KBM-7 (cell line): ENCODE measurements at regions of chr6 and their contacts with region 1.

Region 1: DNA sequence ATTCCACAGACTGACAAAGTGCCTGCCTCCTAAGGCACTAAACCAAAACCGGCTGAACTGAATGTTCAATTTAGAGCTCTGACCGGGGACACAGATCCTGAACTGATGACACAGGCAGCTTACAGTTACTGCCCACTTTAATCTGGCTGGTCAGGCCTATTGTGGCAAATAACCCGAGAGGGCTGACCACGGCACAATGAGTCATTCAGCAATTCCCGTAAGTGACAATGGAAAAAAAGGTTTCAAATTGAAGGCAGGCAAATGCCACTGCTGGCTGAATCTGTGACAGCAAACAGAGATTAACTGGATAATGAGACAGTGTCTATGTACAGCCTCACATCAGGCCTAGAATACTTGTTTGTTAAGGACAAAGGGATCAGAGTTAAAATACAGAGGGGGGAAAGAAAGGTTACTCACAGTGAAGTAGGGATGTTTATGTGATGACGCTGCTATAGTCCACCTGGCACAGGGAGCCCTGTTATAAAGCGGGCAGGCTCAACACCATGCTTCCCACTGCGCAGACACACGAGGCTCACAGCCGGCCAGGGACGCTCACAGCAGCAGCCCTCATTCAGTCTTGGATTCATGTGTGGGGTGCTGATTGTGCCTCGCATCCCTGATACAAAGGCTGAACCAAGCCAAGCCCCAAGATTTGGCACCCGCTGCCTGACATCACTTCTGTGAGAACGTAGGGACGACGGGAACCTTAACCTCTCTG is 54.4 kb downstream of the RTN4IP1 start:
- DNase-seq: no peak

Region 2: GRCh38 chr6:106979427-106979884 is 404.6 kb after region 1 on chr6:
- in situ Hi-C with region 1: loop called (anchors 25 kb)
- DNase-seq: peak; percentile 82